HepG2 (cell line): ENCODE measurements at regions of chr20 and their contacts with region 1.

Region 1: GRCh38 chr20:51306503-51307358 is 235.8 kb downstream of the NFATC2 start:
- DNase-seq: peak; percentile 56
- ATAC-seq: peak; percentile 99
- H3K4me3 ChIP-seq: no peak overlapping the region
- H3K27ac ChIP-seq: no peak overlapping the region
- H3K4me1 ChIP-seq: no peaks in the 10 kb centered on the region
- H3K27me3 ChIP-seq: peaks cover 0 to 29% of the 10 kb centered on the region in 2 experiments; a peak in 3 of 5 replicates
- CTCF ChIP-seq: peak; percentile 100
- EP300 ChIP-seq: no peak
- POLR2A ChIP-seq: no peak
- RAD21 ChIP-seq: peak; percentile 98

Region 2: DNA sequence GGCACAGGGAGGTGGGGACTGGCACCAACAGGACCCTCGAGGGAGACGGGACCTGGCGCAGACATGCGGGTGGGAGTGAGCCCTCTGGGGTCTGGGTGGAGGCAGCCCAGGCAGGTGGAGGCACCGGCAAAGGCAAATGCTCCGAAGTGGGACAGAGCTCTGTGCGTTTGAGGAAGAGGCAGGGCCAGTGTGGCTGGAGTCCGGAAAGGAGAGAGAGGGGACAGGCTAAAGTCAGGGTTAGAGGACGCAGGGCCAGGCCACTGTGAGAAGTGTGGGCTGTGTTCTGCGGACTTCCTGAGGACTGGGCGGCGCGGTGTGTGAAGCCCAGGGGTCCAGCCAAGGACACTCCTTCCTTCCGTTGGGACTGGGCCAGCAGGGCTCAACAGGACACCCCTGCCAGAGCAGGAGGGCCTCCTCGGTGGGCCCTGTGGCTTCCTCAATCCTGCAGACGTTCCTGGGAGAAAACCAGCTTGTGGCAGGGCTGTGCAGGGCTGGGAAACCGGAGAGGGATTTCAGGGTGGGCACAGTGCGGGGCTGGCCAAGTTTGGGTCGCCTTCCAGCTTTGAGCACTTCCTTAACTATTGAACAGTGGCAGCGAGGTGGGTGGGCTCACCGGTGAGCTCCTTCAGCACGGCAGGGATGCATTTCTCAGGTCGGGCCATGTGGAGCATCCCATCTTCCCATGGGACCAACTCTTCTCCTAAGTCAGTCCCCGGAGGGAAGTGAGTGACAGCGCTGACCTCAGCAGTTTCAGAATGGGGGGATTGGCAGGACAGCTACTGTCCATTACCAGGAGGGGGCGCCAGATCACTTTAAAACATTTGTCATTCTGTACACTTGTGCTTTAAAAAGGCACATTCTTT is 325.6 kb before region 1 on chr20:
- CTCF ChIA-PET with region 1: interaction called, 18 read pairs
- POLR2A ChIA-PET with region 1: no interaction called
- in situ Hi-C with region 1: loop called (anchors 5 kb)
- intact Hi-C with region 1: no loop called
- DNase-seq: peak; percentile 79
- ATAC-seq: peak; percentile 63
- H3K4me3 ChIP-seq: peak overlapping the region in 1 of 3 experiments; percentile 9; a peak in 1 of 6 replicates
- H3K27ac ChIP-seq: no peak overlapping the region
- H3K4me1 ChIP-seq: peaks cover 41% of the 10 kb centered on the region
- H3K27me3 ChIP-seq: peaks cover 9 to 44% of the 10 kb centered on the region in 2 experiments; a peak in 4 of 5 replicates
- CTCF ChIP-seq: peak; percentile 80
- EP300 ChIP-seq: no peak
- POLR2A ChIP-seq: no peak
- RAD21 ChIP-seq: peak; percentile 30; the same call in 1 of the 2 replicates

Region 3: GRCh38 chr20:50992733-50993457 is 313.8 kb before region 1 on chr20:
- CTCF ChIA-PET with region 1: interaction called, 45 read pairs
- POLR2A ChIA-PET with region 1: no interaction called
- in situ Hi-C with region 1: loop called (anchors 5 kb)
- intact Hi-C with region 1: no loop called
- DNase-seq: peak; percentile 89
- ATAC-seq: peak; percentile 97
- H3K4me3 ChIP-seq: peak overlapping the region in 1 of 3 experiments; percentile 14; a peak in 1 of 6 replicates
- H3K27ac ChIP-seq: no peak overlapping the region
- H3K4me1 ChIP-seq: peaks cover 8% of the 10 kb centered on the region; the same call in 1 of the 2 replicates
- H3K27me3 ChIP-seq: peaks cover 0 to 23% of the 10 kb centered on the region in 2 experiments; a peak in 4 of 5 replicates
- CTCF ChIP-seq: peak; percentile 89
- EP300 ChIP-seq: no peak; a peak in 1 of 4 replicates
- POLR2A ChIP-seq: no peak
- RAD21 ChIP-seq: peak; percentile 72

Region 4: GRCh38 chr20:51220293-51220706 is 86.4 kb before region 1 on chr20:
- CTCF ChIA-PET with region 1: interaction called, 18 read pairs
- POLR2A ChIA-PET with region 1: no interaction called
- in situ Hi-C with region 1: loop called (anchors 5 kb)
- intact Hi-C with region 1: loop called (anchors 1 kb)
- DNase-seq: peak; percentile 23
- ATAC-seq: peak; percentile 92
- H3K4me3 ChIP-seq: no peak overlapping the region
- H3K27ac ChIP-seq: no peak overlapping the region
- H3K4me1 ChIP-seq: no peaks in the 10 kb centered on the region
- H3K27me3 ChIP-seq: peaks cover 6 to 20% of the 10 kb centered on the region in 2 experiments; a peak in 4 of 5 replicates
- CTCF ChIP-seq: peak; percentile 93
- EP300 ChIP-seq: no peak
- POLR2A ChIP-seq: no peak
- RAD21 ChIP-seq: peak; percentile 76